ENCODE measurements at regions of chr2 and their contacts with region 1.

Region 1: DNA sequence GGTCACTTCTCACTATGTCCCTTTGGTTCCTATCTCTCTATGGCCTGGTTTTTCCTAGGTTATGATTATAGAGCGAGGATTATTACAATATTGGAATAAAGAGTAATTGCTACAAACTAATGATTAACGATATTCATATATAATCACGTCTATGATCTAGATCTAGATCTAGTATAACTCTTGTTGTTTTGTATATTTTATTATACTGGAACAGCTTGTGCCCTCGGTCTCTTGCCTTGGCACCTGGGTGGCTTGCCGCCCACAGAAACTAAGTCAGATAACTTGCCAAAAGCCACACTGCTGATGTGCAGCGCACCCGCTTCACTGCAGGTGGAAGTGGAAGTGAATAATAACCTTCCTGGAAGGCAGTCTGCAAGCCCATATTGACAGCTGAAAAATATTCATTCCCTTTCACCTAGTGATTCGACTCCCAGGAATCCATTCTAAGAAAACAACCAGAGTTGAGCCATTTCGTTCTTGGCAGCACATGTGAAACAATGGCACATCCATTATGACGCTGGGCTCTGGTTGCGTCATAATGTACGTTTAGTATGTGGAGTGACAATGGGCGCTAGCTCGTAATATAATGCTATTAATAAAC is 725 bp upstream of the ANKRD53 start:
- DNase-seq: peak in 1 of 2 experiments; percentile 64
- H3K4me3 ChIP-seq: peak overlapping the region; percentile 53; the same call in 1 of the 2 replicates
- H3K27ac ChIP-seq: no peak overlapping the region
- H3K4me1 ChIP-seq: peaks cover 17% of the 10 kb centered on the region
- H3K27me3 ChIP-seq: no peaks in the 10 kb centered on the region
- CTCF ChIP-seq: peak; percentile 23; the same call in 1 of the 2 replicates

Region 2: DNA sequence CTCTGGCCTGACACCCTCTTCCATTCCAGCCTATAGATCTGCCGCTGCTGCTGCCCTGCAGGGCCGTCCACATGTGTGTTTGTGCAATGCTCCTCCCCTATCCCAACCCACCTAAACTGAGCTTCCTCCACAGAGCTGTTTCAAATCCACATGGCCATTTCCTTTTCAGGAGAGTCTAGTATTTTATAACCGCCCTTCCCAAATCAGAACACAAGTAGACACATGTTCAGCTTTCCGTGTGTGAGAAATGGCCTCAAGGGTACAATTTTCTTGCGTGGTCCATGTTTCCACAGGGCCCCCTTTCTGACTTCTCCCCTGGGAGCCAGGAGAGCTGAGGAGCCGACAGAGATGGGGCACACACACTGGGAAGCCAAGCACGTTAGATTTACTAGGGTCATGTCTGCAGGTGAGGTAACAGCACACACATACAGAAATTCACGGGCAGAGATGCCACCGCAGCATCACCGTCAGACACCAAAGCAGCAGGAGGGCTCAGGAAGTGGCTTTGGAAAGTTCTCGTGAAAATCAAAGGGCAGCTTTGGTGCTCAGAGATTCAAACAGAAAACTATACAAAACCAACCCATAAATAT is 321.2 kb before region 1 on chr2:
- CTCF ChIA-PET with region 1: no interaction called
- POLR2A ChIA-PET with region 1: no interaction called
- intact Hi-C with region 1: loop called (anchors 10 kb)
- DNase-seq: no peak
- H3K4me3 ChIP-seq: no peak overlapping the region
- H3K27ac ChIP-seq: no peak overlapping the region
- H3K4me1 ChIP-seq: no peaks in the 10 kb centered on the region
- H3K27me3 ChIP-seq: peaks cover 47% of the 10 kb centered on the region
- CTCF ChIP-seq: no peak

Region 3: GRCh38 chr2:70861777-70862625 is 115.7 kb before region 1 on chr2:
- CTCF ChIA-PET with region 1: no interaction called
- POLR2A ChIA-PET with region 1: no interaction called
- intact Hi-C with region 1: loop called (anchors 1 kb)
- DNase-seq: peak; percentile 59 to 86
- H3K4me3 ChIP-seq: no peak overlapping the region
- H3K27ac ChIP-seq: no peak overlapping the region
- H3K4me1 ChIP-seq: no peaks in the 10 kb centered on the region
- H3K27me3 ChIP-seq: peaks cover 30% of the 10 kb centered on the region
- CTCF ChIP-seq: peak; percentile 93

Region 4: DNA sequence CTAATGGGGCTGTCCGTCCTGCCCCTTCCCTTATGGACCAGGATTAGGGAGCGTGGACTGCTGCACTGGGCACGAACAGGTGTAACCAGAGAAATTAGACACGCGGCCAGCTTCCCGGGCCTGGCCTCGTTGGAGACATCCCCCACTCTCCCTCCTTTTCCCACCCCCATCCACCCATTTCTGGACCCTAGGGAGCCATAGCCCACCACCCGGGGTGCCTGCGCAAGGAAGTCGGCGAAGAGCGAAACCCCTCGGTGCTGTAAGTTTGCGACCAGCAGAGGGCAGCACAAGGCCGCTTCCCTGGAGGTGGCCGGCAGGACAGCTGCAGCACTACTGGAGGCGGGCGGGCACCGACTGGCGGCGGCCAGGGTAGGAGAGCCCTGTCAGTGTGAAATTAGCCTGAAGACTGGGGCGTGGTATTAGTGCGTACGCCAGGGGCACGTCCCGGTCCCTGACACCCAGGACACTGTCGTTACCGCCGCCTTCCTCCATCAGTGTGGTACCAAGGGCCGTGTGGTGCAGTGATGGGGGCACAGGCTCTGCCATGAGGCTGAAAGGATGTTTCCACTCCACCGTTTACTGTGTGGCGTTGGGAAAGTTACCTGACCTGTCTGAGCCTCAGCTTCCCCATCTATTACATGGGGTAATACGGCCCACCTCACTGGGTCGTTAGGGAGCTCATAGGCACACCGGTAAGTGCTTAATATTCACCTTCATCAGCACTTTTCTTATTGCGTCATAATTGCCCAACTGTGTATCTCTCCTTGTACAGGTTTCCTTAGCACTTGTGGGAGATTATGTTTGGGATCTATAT is 106.1 kb before region 1 on chr2:
- CTCF ChIA-PET with region 1: no interaction called
- POLR2A ChIA-PET with region 1: no interaction called
- intact Hi-C with region 1: loop called (anchors 1 kb)
- DNase-seq: peak; percentile 61 to 84
- H3K4me3 ChIP-seq: no peak overlapping the region
- H3K27ac ChIP-seq: no peak overlapping the region
- H3K4me1 ChIP-seq: no peaks in the 10 kb centered on the region
- H3K27me3 ChIP-seq: peaks cover 41% of the 10 kb centered on the region
- CTCF ChIP-seq: peak; percentile 91

Region 5: GRCh38 chr2:70948337-70949003 is 29.2 kb before region 1 on chr2:
- CTCF ChIA-PET with region 1: no interaction called
- POLR2A ChIA-PET with region 1: no interaction called
- intact Hi-C with region 1: loop called (anchors 2 kb)
- DNase-seq: peak in 1 of 2 experiments; percentile 70
- H3K4me3 ChIP-seq: peak overlapping the region; percentile 45; the same call in 1 of the 2 replicates
- H3K27ac ChIP-seq: no peak overlapping the region
- H3K4me1 ChIP-seq: peaks cover 7% of the 10 kb centered on the region; the same call in 1 of the 2 replicates
- H3K27me3 ChIP-seq: no peaks in the 10 kb centered on the region
- CTCF ChIP-seq: peak; percentile 86

Measured in PC-9 (cell line).